Activated naive CD4-positive, alpha-beta T cell treated with anti-CD3 and anti-CD28 coated beads for 36 hours (primary cell): ENCODE measurements at regions of chr6 and their contacts with region 1.

Region 1: GRCh38 chr6:11366183-11366933 is 133.9 kb upstream of the NEDD9 start:
- DNase-seq: peak; percentile 75
- H3K4me3 Mint-ChIP-seq: peak overlapping the region; percentile 29
- H3K27ac Mint-ChIP-seq: peak overlapping the region; percentile 67
- H3K4me1 Mint-ChIP-seq: peaks cover 96% of the 10 kb centered on the region
- H3K27me3 Mint-ChIP-seq: no peaks in the 10 kb centered on the region

Region 2: GRCh38 chr6:10837995-10838793 is 528.2 kb before region 1 on chr6 and contains the start of gene MAK:
- CTCF ChIA-PET with region 1: no interaction called
- intact Hi-C with region 1: loop called (anchors 2 kb)
- DNase-seq: peak; percentile 86
- H3K4me3 Mint-ChIP-seq: peak within 1 kb of the TSS; percentile 74
- H3K27ac Mint-ChIP-seq: peak within 1 kb of the TSS; percentile 85
- H3K4me1 Mint-ChIP-seq: peaks cover 17% of the 10 kb centered on the region
- H3K27me3 Mint-ChIP-seq: peaks cover 50% of the 10 kb centered on the region
- total RNA-seq, gene MAK: 0.12 to 0.14 TPM

Region 3: DNA sequence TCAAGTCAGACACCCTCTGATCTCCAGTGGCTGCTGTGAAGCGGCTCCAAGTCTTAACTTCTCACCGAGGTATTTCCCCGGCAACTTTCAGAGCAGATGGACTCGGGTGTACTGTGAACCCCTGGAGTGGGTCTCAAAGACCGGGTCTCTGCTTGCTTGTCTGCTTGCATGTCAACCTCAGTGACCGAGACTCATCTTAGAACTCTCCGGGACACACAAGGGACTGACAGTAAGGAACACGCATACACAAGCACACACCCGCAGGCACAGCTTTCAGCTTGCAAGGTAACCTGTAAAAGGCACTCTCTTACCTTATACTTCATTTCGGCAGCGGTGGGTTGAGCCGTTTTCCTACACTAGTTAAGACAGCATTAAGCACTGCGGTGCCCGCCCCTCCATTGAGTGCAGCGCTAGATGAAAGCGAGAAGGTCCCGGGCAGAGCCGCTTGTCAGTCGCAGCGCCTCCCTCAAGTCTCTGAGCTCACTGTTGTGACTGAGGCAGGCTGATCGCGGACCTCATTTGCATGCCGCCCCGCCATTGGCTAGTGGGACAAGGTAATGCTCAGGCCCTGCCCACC is 134.1 kb before region 1 on chr6 and contains the start of gene NEDD9:
- CTCF ChIA-PET with region 1: interaction called, 3 read pairs
- intact Hi-C with region 1: loop called (anchors 1 kb)
- DNase-seq: peak; percentile 98
- H3K4me3 Mint-ChIP-seq: peak within 1 kb of the TSS; percentile 87
- H3K27ac Mint-ChIP-seq: peak within 1 kb of the TSS; percentile 97
- H3K4me1 Mint-ChIP-seq: peaks cover 48% of the 10 kb centered on the region
- H3K27me3 Mint-ChIP-seq: peaks cover 2% of the 10 kb centered on the region
- total RNA-seq, gene NEDD9: 17.5 to 18.8 TPM

Region 4: DNA sequence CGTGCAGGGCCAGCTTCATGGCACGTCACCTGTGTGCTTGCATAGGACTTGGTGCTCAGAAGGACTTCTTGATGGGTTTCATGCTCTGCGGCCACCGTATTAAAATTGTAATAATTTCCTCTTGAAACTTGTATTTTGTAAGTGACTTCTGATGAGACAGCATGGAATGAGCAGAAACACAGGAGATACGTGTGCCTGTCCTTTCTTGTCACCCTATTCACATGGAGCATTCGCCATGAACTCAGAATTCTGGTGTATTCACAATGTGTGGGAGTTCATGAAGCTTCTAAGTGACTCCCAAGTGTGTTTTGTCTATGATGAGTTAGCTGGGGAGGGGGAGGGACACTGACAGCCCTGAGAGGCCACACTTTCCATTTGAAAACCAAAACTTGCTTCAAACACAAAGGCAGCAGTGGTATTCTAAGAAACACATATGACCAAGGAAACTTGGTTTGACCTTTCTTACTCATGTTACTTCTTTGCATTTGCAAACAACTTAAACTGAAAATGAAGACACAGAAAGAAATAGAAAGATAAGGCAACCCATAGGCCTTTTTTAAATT is 41.8 kb before region 1 on chr6:
- CTCF ChIA-PET with region 1: no interaction called
- intact Hi-C with region 1: loop called (anchors 1 kb)
- DNase-seq: peak; percentile 70
- H3K4me3 Mint-ChIP-seq: peak overlapping the region; percentile 16
- H3K27ac Mint-ChIP-seq: peak overlapping the region; percentile 80
- H3K4me1 Mint-ChIP-seq: peaks cover 42% of the 10 kb centered on the region
- H3K27me3 Mint-ChIP-seq: no peaks in the 10 kb centered on the region

Region 5: GRCh38 chr6:11353921-11354389 is 12.4 kb before region 1 on chr6:
- CTCF ChIA-PET with region 1: interaction called, 18 read pairs
- intact Hi-C with region 1: loop called (anchors 1 kb)
- DNase-seq: peak; percentile 93
- H3K4me3 Mint-ChIP-seq: peak overlapping the region; percentile 54
- H3K27ac Mint-ChIP-seq: peak overlapping the region; percentile 96
- H3K4me1 Mint-ChIP-seq: peaks cover 82% of the 10 kb centered on the region
- H3K27me3 Mint-ChIP-seq: no peaks in the 10 kb centered on the region

Region 6: GRCh38 chr6:11537229-11538051 is 171.1 kb after region 1 on chr6 and contains the start of gene TMEM170B:
- CTCF ChIA-PET with region 1: no interaction called
- intact Hi-C with region 1: loop called (anchors 5 kb)
- DNase-seq: peak; percentile 84
- H3K4me3 Mint-ChIP-seq: peak within 1 kb of the TSS; percentile 78
- H3K27ac Mint-ChIP-seq: no peak within 1 kb of the TSS
- H3K4me1 Mint-ChIP-seq: peaks cover 9% of the 10 kb centered on the region
- H3K27me3 Mint-ChIP-seq: peaks cover 6% of the 10 kb centered on the region
- total RNA-seq, gene TMEM170B: 0.40 to 0.57 TPM

Region 7: GRCh38 chr6:11785774-11786579 is 419.6 kb after region 1 on chr6:
- CTCF ChIA-PET with region 1: no interaction called
- intact Hi-C with region 1: no loop called
- DNase-seq: peak; percentile 62
- H3K4me3 Mint-ChIP-seq: no peak overlapping the region
- H3K27ac Mint-ChIP-seq: peak overlapping the region; percentile 23
- H3K4me1 Mint-ChIP-seq: peaks cover 7% of the 10 kb centered on the region
- H3K27me3 Mint-ChIP-seq: no peaks in the 10 kb centered on the region

Region 8: GRCh38 chr6:11975353-11975977 is 609.1 kb after region 1 on chr6:
- CTCF ChIA-PET with region 1: no interaction called
- intact Hi-C with region 1: no loop called
- DNase-seq: peak; percentile 54
- H3K4me3 Mint-ChIP-seq: peak overlapping the region; percentile 5
- H3K27ac Mint-ChIP-seq: no peak overlapping the region
- H3K4me1 Mint-ChIP-seq: peaks cover 22% of the 10 kb centered on the region
- H3K27me3 Mint-ChIP-seq: no peaks in the 10 kb centered on the region